ENCODE measurements at regions of chr11 and their contacts with region 1.

Region 1: DNA sequence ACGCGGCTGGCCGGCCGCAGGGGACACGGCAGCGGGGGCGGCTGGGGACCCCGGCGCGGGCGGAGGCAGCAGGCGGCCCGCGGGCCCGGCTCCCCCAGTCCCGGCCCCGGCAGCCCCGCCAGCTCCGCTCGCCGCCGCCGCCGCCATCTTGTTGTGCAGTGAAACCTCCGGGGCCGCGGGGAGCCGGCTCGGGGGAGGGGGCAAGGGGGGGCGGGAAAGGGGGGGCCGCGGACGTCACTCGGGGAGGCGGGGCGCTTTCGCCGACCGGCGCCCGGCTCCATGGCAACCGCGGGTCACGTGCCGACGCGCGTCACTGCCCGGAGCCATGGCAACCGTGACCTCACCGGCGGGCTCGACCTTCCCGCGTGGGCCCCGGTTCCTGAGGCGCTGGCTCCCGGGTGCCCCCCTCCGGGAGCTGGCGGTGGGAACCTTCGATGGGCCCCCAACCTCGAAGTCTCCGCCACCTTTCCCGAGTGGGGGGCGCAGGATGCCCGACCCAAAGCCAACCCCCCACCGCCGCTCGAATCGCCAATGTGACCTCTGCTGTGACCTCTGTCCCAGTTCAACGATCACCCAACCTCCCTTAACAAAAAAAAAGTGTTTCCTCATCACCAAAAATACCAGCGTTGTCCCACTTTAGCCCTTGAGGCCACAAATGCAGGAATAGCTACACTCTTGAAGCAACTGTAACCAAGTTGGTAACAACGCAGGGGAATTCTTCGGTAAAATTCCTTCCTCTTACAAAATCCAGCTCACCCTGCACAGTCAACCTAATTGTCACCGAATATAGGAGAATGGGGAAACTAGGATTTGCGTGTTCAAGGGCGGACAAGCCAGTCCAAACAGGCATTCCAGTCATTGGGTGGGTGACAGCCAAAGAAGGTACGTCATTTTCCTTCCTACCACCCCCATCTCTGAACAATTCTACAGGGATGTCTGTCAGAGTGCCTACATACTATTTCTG is at the start of gene SIK3:
- DNase-seq: peak; percentile 90 to 94 (median 91)
- ATAC-seq: peak; percentile 89
- H3K4me3 ChIP-seq: peak within 1 kb of the TSS; percentile 68
- H3K4me3 Mint-ChIP-seq: peak within 1 kb of the TSS; percentile 91 to 97 (median 95)
- H3K27ac ChIP-seq: peak within 1 kb of the TSS; percentile 99
- H3K27ac Mint-ChIP-seq: peak within 1 kb of the TSS; percentile 95 to 100 (median 98)
- H3K4me1 ChIP-seq: peaks cover 27 to 29% of the 10 kb centered on the region in 2 donors
- H3K4me1 Mint-ChIP-seq: peaks cover 30 to 59% (median 50%) of the 10 kb centered on the region in 7 donors
- H3K27me3 ChIP-seq: no peaks in the 10 kb centered on the region
- H3K27me3 Mint-ChIP-seq: peaks cover 0 to 3% (median 0%) of the 10 kb centered on the region in 5 donors
- total RNA-seq, gene SIK3: 34.4 to 85.2 (median 67.0) TPM

Region 2: GRCh38 chr11:116787786-116788486 is 310.6 kb before region 1 on chr11 and contains the start of gene ZPR1:
- CTCF ChIA-PET with region 1: interaction called, 7 read pairs
- POLR2A ChIA-PET with region 1: interaction called, 14 read pairs
- intact Hi-C with region 1: loop called in 1 of 2 experiments (anchors 1 kb)
- DNase-seq: peak; percentile 75 to 88 (median 87)
- ATAC-seq: peak; percentile 92
- H3K4me3 ChIP-seq: peak within 1 kb of the TSS; percentile 79
- H3K4me3 Mint-ChIP-seq: peak within 1 kb of the TSS; percentile 85 to 98 (median 92)
- H3K27ac ChIP-seq: peak within 1 kb of the TSS; percentile 95
- H3K27ac Mint-ChIP-seq: peak within 1 kb of the TSS; percentile 80 to 98 (median 96)
- H3K4me1 ChIP-seq: peaks cover 17 to 24% of the 10 kb centered on the region in 2 donors
- H3K4me1 Mint-ChIP-seq: peaks cover 32 to 57% (median 44%) of the 10 kb centered on the region in 7 donors
- H3K27me3 ChIP-seq: no peaks in the 10 kb centered on the region
- H3K27me3 Mint-ChIP-seq: no peaks in the 10 kb centered on the region
- total RNA-seq, gene ZPR1: 65.8 to 117 (median 68.8) TPM

Region 3: GRCh38 chr11:116879800-116880625 is 218.5 kb before region 1 on chr11:
- CTCF ChIA-PET with region 1: interaction called, 10 read pairs
- POLR2A ChIA-PET with region 1: no interaction called
- intact Hi-C with region 1: loop called in 1 of 2 experiments (anchors 2 kb)
- DNase-seq: peak in 7 of 9 donors; percentile 31 to 54 (median 39)
- ATAC-seq: peak; percentile 84
- H3K4me3 ChIP-seq: no peak overlapping the region
- H3K4me3 Mint-ChIP-seq: no peak overlapping the region
- H3K27ac ChIP-seq: no peak overlapping the region
- H3K27ac Mint-ChIP-seq: peak overlapping the region in 4 of 9 donors; percentile 23 to 67 (median 46)
- H3K4me1 ChIP-seq: no peaks in the 10 kb centered on the region
- H3K4me1 Mint-ChIP-seq: peaks cover 0 to 18% (median 9%) of the 10 kb centered on the region in 7 donors
- H3K27me3 ChIP-seq: no peaks in the 10 kb centered on the region
- H3K27me3 Mint-ChIP-seq: no peaks in the 10 kb centered on the region

Region 4: GRCh38 chr11:117037279-117037974 is 61.1 kb before region 1 on chr11:
- CTCF ChIA-PET with region 1: interaction called, 4 read pairs
- POLR2A ChIA-PET with region 1: interaction called, 3 read pairs
- intact Hi-C with region 1: loop called in 1 of 2 experiments (anchors 1 kb)
- DNase-seq: peak in 6 of 9 donors; percentile 21 to 51 (median 38)
- ATAC-seq: peak; percentile 48
- H3K4me3 ChIP-seq: no peak overlapping the region
- H3K4me3 Mint-ChIP-seq: peak overlapping the region; percentile 4 to 68 (median 50)
- H3K27ac ChIP-seq: peak overlapping the region; percentile 58
- H3K27ac Mint-ChIP-seq: peak overlapping the region; percentile 34 to 93 (median 85)
- H3K4me1 ChIP-seq: peaks cover 17 to 24% of the 10 kb centered on the region in 2 donors
- H3K4me1 Mint-ChIP-seq: peaks cover 25 to 79% (median 64%) of the 10 kb centered on the region in 7 donors
- H3K27me3 ChIP-seq: no peaks in the 10 kb centered on the region
- H3K27me3 Mint-ChIP-seq: no peaks in the 10 kb centered on the region

Region 5: GRCh38 chr11:117143871-117144476 is 45.4 kb after region 1 on chr11 and contains the start of gene PAFAH1B2:
- CTCF ChIA-PET with region 1: no interaction called
- POLR2A ChIA-PET with region 1: no interaction called
- intact Hi-C with region 1: loop called (anchors 1 to 5 kb)
- DNase-seq: peak; percentile 88 to 95 (median 94)
- ATAC-seq: peak; percentile 94
- H3K4me3 ChIP-seq: peak within 1 kb of the TSS; percentile 89
- H3K4me3 Mint-ChIP-seq: peak within 1 kb of the TSS; percentile 88 to 100 (median 97)
- H3K27ac ChIP-seq: peak within 1 kb of the TSS; percentile 85
- H3K27ac Mint-ChIP-seq: peak within 1 kb of the TSS; percentile 90 to 98 (median 97)
- H3K4me1 ChIP-seq: peaks cover 6 to 10% of the 10 kb centered on the region in 2 donors
- H3K4me1 Mint-ChIP-seq: peaks cover 28 to 57% (median 44%) of the 10 kb centered on the region in 7 donors
- H3K27me3 ChIP-seq: no peaks in the 10 kb centered on the region
- H3K27me3 Mint-ChIP-seq: peaks cover 11 to 24% (median 12%) of the 10 kb centered on the region in 5 donors
- total RNA-seq, gene PAFAH1B2: 48.9 to 62.0 (median 55.8) TPM

Region 6: DNA sequence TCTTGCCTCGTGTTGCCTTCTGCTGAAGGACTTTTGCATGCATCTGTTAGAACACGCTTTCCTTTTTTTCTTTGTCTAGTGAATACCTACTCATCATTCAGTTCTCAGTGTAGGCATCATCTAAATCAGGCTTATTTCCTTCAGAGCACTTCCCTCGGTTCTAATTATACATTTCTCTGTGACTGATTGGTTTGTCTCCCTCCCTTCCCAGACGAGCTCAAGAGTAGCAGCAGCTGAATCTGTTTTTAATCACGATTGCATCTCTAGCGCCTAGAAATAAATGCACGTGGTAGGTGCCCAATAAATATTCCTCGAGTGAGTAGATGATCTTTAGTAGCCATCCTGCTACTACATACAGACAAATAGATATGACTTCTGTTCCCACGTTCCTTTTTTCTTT is 235.4 kb after region 1 on chr11:
- CTCF ChIA-PET with region 1: no interaction called
- POLR2A ChIA-PET with region 1: no interaction called
- intact Hi-C with region 1: no loop called
- DNase-seq: no peak
- ATAC-seq: no peak
- H3K4me3 ChIP-seq: no peak overlapping the region
- H3K4me3 Mint-ChIP-seq: no peak overlapping the region
- H3K27ac ChIP-seq: no peak overlapping the region
- H3K27ac Mint-ChIP-seq: no peak overlapping the region
- H3K4me1 ChIP-seq: peaks cover 0 to 3% of the 10 kb centered on the region in 2 donors
- H3K4me1 Mint-ChIP-seq: peaks cover 5 to 24% (median 20%) of the 10 kb centered on the region in 7 donors
- H3K27me3 ChIP-seq: no peaks in the 10 kb centered on the region
- H3K27me3 Mint-ChIP-seq: no peaks in the 10 kb centered on the region

Measured in naive thymus-derived CD4-positive, alpha-beta T cell (primary cell).